Psoas muscle (tissue), 8 donors: ENCODE measurements at regions of chr2 and their contacts with region 1.

Region 1: GRCh38 chr2:127106951-127107621 is at the start of gene BIN1:
- DNase-seq: peak; percentile 96
- ATAC-seq: peak; percentile 68 to 74 (median 72)
- H3K4me3 ChIP-seq: peak within 1 kb of the TSS; percentile 96
- H3K27ac ChIP-seq: peak within 1 kb of the TSS; percentile 98
- H3K4me1 ChIP-seq: peaks cover 23% of the 10 kb centered on the region
- H3K27me3 ChIP-seq: no peaks in the 10 kb centered on the region
- CTCF ChIP-seq: no peak
- total RNA-seq, gene BIN1: 1,036 to 1,643 (median 1,260) TPM

Region 2: GRCh38 chr2:127086990-127087790 is 19.9 kb before region 1 on chr2:
- intact Hi-C with region 1: no loop called
- DNase-seq: peak; percentile 82 to 85
- ATAC-seq: peak; percentile 9 to 24 (median 14)
- H3K4me3 ChIP-seq: peak overlapping the region; percentile 47
- H3K27ac ChIP-seq: peak overlapping the region; percentile 98
- H3K4me1 ChIP-seq: peaks cover 92% of the 10 kb centered on the region
- H3K27me3 ChIP-seq: no peaks in the 10 kb centered on the region
- CTCF ChIP-seq: no peak

Region 3: GRCh38 chr2:127143841-127144782 is 37.0 kb after region 1 on chr2:
- intact Hi-C with region 1: loop called (anchors 2 to 5 kb)
- DNase-seq: no peak
- ATAC-seq: peak; percentile 38 to 61 (median 58)
- H3K4me3 ChIP-seq: no peak overlapping the region
- H3K27ac ChIP-seq: peak overlapping the region; percentile 96
- H3K4me1 ChIP-seq: peaks cover 54% of the 10 kb centered on the region
- H3K27me3 ChIP-seq: no peaks in the 10 kb centered on the region
- CTCF ChIP-seq: peak; percentile 30

Region 4: DNA sequence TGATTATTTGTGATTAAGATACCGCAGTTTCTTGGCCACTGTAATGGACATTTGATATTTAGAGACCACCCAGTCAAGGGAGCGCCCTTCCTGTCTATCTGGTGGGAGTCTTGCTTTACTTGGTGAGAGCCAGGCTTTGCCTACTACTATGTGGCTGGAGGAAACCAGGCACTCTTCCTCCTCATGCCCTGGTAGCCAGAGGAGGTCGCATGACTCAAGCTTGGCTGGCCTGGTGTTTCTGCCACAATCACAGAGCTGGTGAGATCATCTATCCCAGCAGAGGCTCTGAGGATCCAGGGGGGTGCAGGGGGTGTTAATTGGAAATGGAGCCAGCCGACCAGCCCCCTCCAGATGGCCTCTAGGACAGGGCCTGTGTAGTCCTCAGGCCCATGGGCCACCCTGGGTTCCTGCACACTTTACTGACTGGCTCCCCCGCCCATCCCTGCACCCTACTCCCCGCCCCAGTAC is 46.6 kb after region 1 on chr2:
- intact Hi-C with region 1: loop called in 1 of 2 experiments (anchors 5 kb)
- DNase-seq: peak; percentile 68 to 86
- ATAC-seq: peak; percentile 75 to 86 (median 84)
- H3K4me3 ChIP-seq: no peak overlapping the region
- H3K27ac ChIP-seq: peak overlapping the region; percentile 89
- H3K4me1 ChIP-seq: peaks cover 33% of the 10 kb centered on the region
- H3K27me3 ChIP-seq: no peaks in the 10 kb centered on the region
- CTCF ChIP-seq: no peak